Activated CD4-positive, alpha-beta T cell treated with anti-CD3 and anti-CD28 coated beads for 36 hours (primary cell): ENCODE measurements at regions of chr10 and their contacts with region 1.

Region 1: DNA sequence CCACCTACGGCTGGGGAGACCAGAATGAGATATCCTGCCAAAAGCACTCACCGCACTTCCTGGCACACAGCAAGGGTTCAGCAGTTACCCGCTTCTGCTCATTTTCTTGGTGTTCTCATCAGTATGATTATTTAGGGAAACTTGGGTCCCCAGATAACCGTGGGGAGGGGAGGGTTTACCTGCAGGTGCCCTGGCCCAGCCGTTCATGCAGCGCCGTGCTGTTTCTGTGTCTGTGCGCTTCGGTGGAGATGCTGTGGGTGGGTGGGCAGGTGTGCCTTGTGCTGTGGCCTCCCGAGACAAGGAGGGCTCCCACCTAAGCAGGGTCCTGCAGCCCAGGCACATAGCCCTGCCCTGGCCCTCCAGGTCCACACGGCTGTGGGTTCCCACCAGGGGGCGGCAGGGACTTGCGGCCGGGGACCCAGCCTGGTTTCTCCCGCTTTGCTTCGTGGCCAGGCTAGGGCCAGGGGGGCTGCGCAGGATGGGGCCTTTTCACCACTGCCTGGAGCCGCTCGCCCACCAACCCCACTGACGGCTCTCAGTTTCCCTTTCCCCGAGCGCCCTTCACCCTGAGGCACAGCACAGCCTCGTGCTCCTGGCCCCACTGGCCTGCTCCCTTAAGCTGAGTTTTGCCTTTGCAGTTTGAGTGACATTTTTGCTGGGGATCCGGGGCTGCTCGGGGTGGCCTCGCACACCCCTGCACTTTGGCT is 78.5 kb downstream of the LHPP start:
- DNase-seq: peak; percentile 81
- ATAC-seq: peak; percentile 84
- H3K4me3 Mint-ChIP-seq: no peak overlapping the region
- H3K27ac Mint-ChIP-seq: no peak overlapping the region
- H3K4me1 Mint-ChIP-seq: peaks cover 4% of the 10 kb centered on the region
- H3K27me3 Mint-ChIP-seq: no peaks in the 10 kb centered on the region

Region 2: GRCh38 chr10:124522933-124523871 is 16.9 kb before region 1 on chr10:
- CTCF ChIA-PET with region 1: no interaction called
- POLR2A ChIA-PET with region 1: no interaction called
- intact Hi-C with region 1: no loop called
- DNase-seq: no peak
- ATAC-seq: no peak
- H3K4me3 Mint-ChIP-seq: no peak overlapping the region
- H3K27ac Mint-ChIP-seq: no peak overlapping the region
- H3K4me1 Mint-ChIP-seq: no peaks in the 10 kb centered on the region
- H3K27me3 Mint-ChIP-seq: no peaks in the 10 kb centered on the region

Region 3: GRCh38 chr10:124748166-124748565 is 208.1 kb after region 1 on chr10:
- CTCF ChIA-PET with region 1: interaction called, 54 read pairs
- POLR2A ChIA-PET with region 1: no interaction called
- intact Hi-C with region 1: loop called in 1 of 2 experiments (anchors 1 kb)
- DNase-seq: no peak
- ATAC-seq: no peak
- H3K4me3 Mint-ChIP-seq: no peak overlapping the region
- H3K27ac Mint-ChIP-seq: no peak overlapping the region
- H3K4me1 Mint-ChIP-seq: peaks cover 25% of the 10 kb centered on the region
- H3K27me3 Mint-ChIP-seq: no peaks in the 10 kb centered on the region

Region 4: DNA sequence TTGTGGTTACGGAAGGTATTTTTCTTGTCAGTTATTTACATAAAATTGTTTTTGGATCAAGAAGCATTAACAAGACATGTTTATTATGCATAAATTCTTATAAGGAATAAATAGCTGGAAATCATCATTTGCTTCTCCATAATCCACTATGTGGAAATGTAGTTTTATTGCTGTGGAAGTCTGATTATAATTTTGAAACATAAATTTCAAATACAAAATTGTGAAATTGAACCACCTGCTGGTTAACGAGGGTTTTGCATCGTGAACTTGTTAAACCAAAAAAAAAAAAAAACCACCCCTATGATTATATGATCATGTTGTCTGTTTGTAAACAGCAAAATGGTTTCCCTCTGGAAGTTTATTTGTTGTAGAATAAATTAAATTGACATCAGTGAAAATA is 287.4 kb after region 1 on chr10:
- CTCF ChIA-PET with region 1: interaction called, 28 read pairs
- POLR2A ChIA-PET with region 1: no interaction called
- intact Hi-C with region 1: loop called in 1 of 2 experiments (anchors 1 kb)
- DNase-seq: peak; percentile 11
- ATAC-seq: no peak
- H3K4me3 Mint-ChIP-seq: no peak overlapping the region
- H3K27ac Mint-ChIP-seq: no peak overlapping the region
- H3K4me1 Mint-ChIP-seq: peaks cover 2% of the 10 kb centered on the region
- H3K27me3 Mint-ChIP-seq: no peaks in the 10 kb centered on the region

Region 5: DNA sequence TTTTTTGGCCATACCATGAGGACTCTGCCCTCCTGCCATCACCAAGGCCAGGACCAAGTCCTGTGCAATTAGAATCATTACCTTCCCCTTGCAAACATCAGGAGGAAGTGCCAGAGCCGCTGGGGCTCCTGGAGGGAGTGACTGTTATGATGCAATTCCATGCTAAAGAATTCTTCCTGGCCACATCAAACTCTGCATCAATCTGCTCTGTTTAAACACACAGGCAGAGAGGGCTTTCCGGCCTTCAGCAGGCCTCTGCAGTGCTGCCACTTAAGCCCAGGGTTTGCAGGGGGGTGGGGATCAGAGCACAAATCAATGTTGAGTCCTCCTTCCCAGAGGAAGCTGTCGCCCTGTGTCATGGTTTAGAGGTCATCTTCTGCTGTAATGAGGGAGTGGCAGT is 562.1 kb after region 1 on chr10:
- CTCF ChIA-PET with region 1: no interaction called
- POLR2A ChIA-PET with region 1: no interaction called
- intact Hi-C with region 1: no loop called
- DNase-seq: no peak
- ATAC-seq: no peak
- H3K4me3 Mint-ChIP-seq: no peak overlapping the region
- H3K27ac Mint-ChIP-seq: no peak overlapping the region
- H3K4me1 Mint-ChIP-seq: no peaks in the 10 kb centered on the region
- H3K27me3 Mint-ChIP-seq: no peaks in the 10 kb centered on the region